Right lobe of liver (tissue), 6 donors: ENCODE measurements at regions of chr11 and their contacts with region 1.

Region 1: GRCh38 chr11:17598700-17599459 is 51.8 kb downstream of the OTOG start:
- DNase-seq: peak; percentile 71 to 80 (median 77)
- ATAC-seq: peak; percentile 86 to 98 (median 93)
- H3K4me3 ChIP-seq: no peak overlapping the region
- H3K27ac ChIP-seq: no peak overlapping the region
- H3K4me1 ChIP-seq: no peaks in the 10 kb centered on the region
- H3K27me3 ChIP-seq: no peaks in the 10 kb centered on the region
- CTCF ChIP-seq: peak; percentile 88 to 96 (median 91)
- POLR2A ChIP-seq: no peak

Region 2: DNA sequence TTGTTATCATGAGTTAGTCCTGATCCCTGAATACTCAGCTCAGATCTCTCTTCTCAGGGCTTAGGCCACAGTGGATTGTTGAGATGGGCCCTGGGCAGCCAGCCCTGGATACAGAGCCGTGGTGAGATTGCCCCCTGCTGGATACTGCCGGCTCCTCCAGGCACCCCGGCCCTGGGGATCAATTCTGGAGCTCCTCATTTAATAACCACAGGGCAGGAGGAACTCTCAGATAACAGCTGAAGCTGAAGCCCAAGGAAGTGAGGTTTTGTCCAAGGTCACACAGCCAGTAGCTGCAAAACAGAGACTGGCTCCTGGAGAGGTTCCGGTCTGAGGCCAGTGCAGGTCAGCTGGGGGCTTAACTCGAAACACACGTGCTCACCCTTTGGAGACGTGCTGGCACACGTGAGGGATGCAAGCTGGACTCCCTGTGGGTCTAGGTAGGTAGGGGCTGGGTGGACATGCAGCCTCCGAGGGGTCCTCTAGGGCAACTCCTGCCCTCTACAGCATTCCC is 70.6 kb before region 1 on chr11:
- intact Hi-C with region 1: no loop called
- DNase-seq: peak; percentile 55 to 69 (median 61)
- ATAC-seq: peak; percentile 81 to 95 (median 88)
- H3K4me3 ChIP-seq: no peak overlapping the region
- H3K27ac ChIP-seq: no peak overlapping the region
- H3K4me1 ChIP-seq: no peaks in the 10 kb centered on the region
- H3K27me3 ChIP-seq: no peaks in the 10 kb centered on the region
- CTCF ChIP-seq: peak; percentile 67 to 79 (median 68)
- POLR2A ChIP-seq: no peak

Region 3: GRCh38 chr11:17722000-17722643 is 123.2 kb after region 1 on chr11:
- intact Hi-C with region 1: loop called (anchors 5 kb)
- DNase-seq: peak in 1 of 3 donors; percentile 36
- ATAC-seq: peak in 3 of 4 donors; percentile 43 to 68 (median 45)
- H3K4me3 ChIP-seq: no peak overlapping the region
- H3K27ac ChIP-seq: no peak overlapping the region
- H3K4me1 ChIP-seq: no peaks in the 10 kb centered on the region
- H3K27me3 ChIP-seq: peaks cover 18 to 41% of the 10 kb centered on the region in 2 donors
- CTCF ChIP-seq: peak in 3 of 4 donors; percentile 34 to 40 (median 37)
- POLR2A ChIP-seq: no peak

Region 4: DNA sequence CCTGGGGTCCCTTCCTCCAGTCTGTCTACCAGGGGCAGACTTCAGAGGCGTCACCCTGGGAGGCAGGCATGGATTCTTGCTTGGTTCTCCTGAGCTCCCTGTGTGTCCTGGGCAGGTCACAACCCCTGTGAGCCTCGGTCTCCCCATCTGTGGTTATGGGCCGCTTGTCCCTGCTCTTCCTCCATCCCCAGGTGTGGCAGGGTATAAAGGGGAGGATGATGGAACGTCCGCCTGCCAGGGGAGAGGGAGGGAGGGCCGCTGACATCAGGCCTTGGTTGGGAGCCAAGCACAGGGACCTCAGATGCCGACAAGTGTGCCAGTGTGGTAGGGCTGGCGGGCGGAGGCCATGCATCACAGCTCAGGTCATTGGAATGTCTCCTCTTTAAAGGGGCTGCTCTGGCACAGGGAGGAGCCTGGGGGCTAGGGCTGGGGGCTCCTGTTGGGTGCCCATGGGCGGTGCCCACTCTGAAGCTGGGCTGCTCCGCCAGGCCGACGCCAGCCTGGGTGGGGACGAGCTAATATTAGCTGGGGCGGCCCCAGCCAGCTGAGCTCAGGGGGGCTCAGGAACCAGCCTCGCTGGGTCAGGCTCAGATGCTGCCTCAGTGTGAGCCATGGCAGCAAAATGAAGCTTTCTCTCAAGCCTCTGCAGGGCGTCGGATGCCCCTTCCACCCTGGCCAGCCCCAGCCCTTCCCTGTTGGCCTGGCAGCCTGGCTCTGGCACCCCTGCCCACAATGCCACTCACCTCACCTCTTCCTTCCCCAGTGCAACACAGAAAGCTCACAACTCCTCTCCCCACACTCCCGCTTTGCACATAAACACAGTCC is 148.5 kb after region 1 on chr11:
- intact Hi-C with region 1: no loop called
- DNase-seq: peak in 1 of 3 donors; percentile 31
- ATAC-seq: no peak
- H3K4me3 ChIP-seq: no peak overlapping the region
- H3K27ac ChIP-seq: no peak overlapping the region
- H3K4me1 ChIP-seq: peaks cover 0 to 18% (median 4%) of the 10 kb centered on the region in 4 donors
- H3K27me3 ChIP-seq: no peaks in the 10 kb centered on the region
- CTCF ChIP-seq: no peak
- POLR2A ChIP-seq: no peak

Region 5: DNA sequence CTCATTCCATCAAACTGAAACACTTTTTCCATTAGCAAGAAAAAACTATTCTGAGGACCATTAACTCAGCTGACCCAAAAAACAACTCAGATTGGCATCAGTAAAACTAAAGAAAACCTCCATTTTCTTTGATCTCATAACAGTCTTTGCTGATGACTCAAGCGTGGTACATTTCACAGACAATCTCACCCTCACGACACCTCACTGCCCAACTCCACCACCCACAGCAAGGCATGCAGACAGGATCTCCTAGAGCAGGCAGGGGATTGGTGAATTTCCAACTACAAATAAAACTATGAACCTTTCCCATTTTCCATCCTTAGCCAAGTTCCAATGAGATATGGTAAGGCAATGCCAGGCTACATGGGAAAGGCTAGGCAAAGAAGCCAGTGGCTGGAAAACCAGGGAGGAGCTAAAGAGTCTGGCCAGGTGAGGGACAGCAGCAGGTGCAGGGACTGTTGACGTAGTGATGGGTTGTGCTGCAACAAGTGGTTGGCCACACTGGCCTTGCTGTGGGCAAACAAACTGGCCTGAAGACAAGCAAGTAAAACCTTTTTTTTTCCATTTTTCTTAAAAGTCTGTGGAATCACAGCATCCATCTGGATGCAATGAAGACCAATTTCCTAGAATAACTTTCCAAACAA is 316.7 kb after region 1 on chr11:
- intact Hi-C with region 1: no loop called
- DNase-seq: no peak
- ATAC-seq: no peak
- H3K4me3 ChIP-seq: no peak overlapping the region
- H3K27ac ChIP-seq: no peak overlapping the region
- H3K4me1 ChIP-seq: peaks cover 0 to 5% (median 0%) of the 10 kb centered on the region in 4 donors
- H3K27me3 ChIP-seq: no peaks in the 10 kb centered on the region
- CTCF ChIP-seq: no peak
- POLR2A ChIP-seq: no peak